ENCODE measurements at regions of chr11 and their contacts with region 1.

Region 1: DNA sequence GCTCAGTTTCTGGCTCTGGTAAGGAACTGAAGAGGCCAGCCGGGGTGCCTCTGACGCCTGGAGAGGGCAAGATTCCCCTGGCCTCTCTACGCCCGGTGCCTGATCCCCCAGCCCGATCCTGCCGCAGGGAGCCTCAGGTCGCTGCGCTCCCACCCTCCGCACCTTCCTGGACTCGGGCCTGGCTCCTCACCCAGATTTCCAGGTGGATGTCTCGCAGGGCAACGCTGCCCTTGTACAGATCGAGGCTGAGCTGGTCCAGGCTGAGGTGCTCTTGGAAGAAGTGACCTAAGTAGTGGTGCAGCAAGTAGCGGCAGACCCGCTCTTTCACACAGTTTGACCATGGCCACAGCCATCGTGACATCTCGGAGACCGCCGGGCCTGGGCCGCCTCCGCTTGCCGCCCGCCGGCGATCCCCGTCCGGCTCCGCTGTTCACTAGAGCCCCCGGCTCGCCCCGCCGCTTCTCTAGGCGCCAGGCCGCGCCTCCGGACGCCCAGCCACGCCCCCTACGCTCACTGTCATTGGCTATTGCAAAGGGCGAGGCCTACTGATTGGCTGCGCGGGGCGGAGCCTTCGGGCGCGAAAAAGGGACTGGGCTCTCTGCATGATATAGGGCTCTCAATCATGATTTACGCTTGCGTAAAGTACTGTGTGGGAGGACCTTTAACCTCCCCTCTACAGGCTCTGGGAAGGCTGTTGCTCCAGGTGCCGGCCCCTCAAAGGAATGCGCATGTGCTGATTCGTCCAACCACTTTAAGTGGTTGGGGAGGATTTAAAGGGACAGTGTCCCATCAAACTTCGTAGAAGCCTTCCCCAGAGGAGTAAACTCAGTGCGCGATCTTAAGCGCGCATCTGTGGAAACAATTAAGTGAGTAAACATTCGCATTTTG is at the start of gene ATG2A:
- DNase-seq: peak; percentile 100
- H3K4me3 ChIP-seq: peak within 1 kb of the TSS; percentile 10 to 86 (median 72)
- H3K27ac ChIP-seq: peak within 1 kb of the TSS; percentile 49
- H3K4me1 ChIP-seq: peaks cover 11% of the 10 kb centered on the region
- H3K27me3 ChIP-seq: no peaks in the 10 kb centered on the region
- CTCF ChIP-seq: no peak
- POLR2A ChIP-seq: peak; percentile 79
- total RNA-seq, gene ATG2A: 24.3 and 27.4 TPM in 2 replicates

Region 2: GRCh38 chr11:64854534-64855429 is 62.2 kb before region 1 on chr11:
- CTCF ChIA-PET with region 1: no interaction called
- POLR2A ChIA-PET with region 1: no interaction called
- dilution Hi-C with region 1: no loop called
- intact Hi-C with region 1: loop called (anchors 2 kb)
- DNase-seq: peak; percentile 91
- H3K4me3 ChIP-seq: no peak overlapping the region
- H3K27ac ChIP-seq: peak overlapping the region; percentile 74
- H3K4me1 ChIP-seq: peaks cover 37% of the 10 kb centered on the region
- H3K27me3 ChIP-seq: no peaks in the 10 kb centered on the region
- CTCF ChIP-seq: no peak
- POLR2A ChIP-seq: peak; percentile 82

Region 3: GRCh38 chr11:64971421-64972233 is 54.6 kb after region 1 on chr11 and contains the start of gene MAJIN:
- CTCF ChIA-PET with region 1: no interaction called
- POLR2A ChIA-PET with region 1: no interaction called
- dilution Hi-C with region 1: no loop called
- intact Hi-C with region 1: loop called (anchors 5 kb)
- DNase-seq: peak; percentile 90
- H3K4me3 ChIP-seq: peak within 1 kb of the TSS in 2 of 3 experiments; percentile 8 to 19
- H3K27ac ChIP-seq: no peak within 1 kb of the TSS
- H3K4me1 ChIP-seq: peaks cover 15% of the 10 kb centered on the region
- H3K27me3 ChIP-seq: no peaks in the 10 kb centered on the region
- CTCF ChIP-seq: no peak
- POLR2A ChIP-seq: no peak
- total RNA-seq, gene MAJIN: not detected in 2 replicates